GM10248 (cell line): ENCODE measurements at regions of chr6 and their contacts with region 1.

Region 1: GRCh38 chr6:73732845-73733675 is 37.1 kb downstream of the CD109 start:
- DNase-seq: peak; percentile 67
- CTCF ChIP-seq: peak; percentile 89

Region 2: GRCh38 chr6:73665686-73666319 is 67.3 kb before region 1 on chr6:
- CTCF ChIA-PET with region 1: interaction called, 16 read pairs
- POLR2A ChIA-PET with region 1: no interaction called
- DNase-seq: no peak
- CTCF ChIP-seq: no peak

Region 3: DNA sequence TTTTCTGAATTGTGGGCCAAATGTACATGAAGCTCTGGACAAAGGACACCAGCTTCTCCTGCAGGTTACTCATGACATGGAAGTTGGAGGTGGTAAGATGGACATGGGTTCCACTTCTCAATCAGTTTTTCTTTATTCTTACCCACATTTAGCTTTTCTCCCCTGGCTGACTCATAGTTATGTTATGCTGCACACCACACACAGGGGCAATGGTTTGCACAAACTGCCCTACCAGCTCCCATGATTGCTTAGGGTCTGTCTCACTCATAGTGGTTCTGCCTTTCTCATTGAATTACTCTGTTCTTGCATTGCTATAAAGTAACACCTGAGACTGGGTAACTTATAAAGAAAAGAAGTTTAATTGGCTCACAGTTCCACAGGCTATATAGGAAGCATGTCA is 41.5 kb before region 1 on chr6:
- CTCF ChIA-PET with region 1: interaction called, 22 read pairs
- POLR2A ChIA-PET with region 1: no interaction called
- DNase-seq: no peak
- CTCF ChIP-seq: no peak

Region 4: DNA sequence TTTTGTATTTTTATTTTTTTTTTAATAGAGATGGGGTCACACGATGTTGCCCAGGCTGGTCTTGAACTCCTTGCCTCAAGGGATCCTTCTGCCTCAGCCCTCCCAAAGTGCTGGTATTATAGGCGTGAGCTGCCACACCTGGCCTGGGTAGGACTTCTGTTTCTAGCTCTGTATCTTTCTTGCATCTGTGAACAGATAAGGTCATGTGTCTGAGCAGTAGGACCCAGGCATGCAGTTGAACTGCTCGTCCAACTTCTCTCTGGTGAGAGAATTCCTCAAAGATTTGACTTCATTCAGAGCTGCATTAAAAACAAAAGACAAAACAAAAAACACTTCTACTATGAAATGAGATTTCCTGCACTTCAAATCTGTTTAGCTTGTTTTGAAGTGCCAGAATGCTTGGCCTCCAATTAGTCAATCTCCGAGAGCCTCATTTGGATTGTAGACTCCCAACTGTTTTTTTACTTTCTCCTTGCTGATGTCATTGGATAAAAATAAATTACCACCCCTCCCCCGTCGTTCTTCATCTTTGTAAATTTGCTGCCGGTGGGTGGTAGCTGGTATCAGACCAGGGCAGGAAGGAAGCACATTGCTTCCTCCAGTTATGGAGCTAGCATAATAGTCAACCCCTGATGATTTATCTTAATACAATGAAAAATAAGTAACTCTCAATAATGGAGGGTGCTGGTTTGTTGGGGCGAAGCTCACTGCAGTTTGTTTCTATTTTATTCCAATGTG is 19.5 kb before region 1 on chr6:
- CTCF ChIA-PET with region 1: interaction called, 34 read pairs
- POLR2A ChIA-PET with region 1: no interaction called
- DNase-seq: no peak
- CTCF ChIP-seq: no peak

Region 5: DNA sequence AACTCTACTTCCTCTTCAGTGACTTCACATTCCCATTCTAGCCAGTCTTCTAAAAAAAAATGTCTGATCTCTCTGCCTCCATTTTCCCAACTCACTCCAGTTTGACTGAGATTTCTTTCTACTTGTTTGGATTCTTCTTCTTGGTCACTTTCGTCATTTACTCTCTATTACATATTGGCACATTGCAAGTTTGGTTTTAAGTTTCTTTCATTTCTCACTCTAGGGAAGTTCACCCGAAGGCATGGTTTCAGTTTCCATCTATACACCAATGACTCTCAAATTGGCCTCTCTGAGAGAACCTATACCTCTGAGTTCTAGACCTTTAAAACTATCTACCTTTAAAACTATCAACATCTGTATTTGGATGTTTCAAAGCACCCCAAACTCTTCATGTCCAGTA is 14.2 kb after region 1 on chr6:
- CTCF ChIA-PET with region 1: interaction called, 51 read pairs
- POLR2A ChIA-PET with region 1: no interaction called
- DNase-seq: peak; percentile 52
- CTCF ChIP-seq: no peak